OCI-LY7 (cell line): ENCODE measurements at regions of chr17 and their contacts with region 1.

Region 1: GRCh38 chr17:82105882-82106687 is 8.0 kb upstream of the FASN start:
- DNase-seq: peak; percentile 87
- H3K4me3 ChIP-seq: peak overlapping the region; percentile 58
- H3K27ac ChIP-seq: peak overlapping the region; percentile 62
- H3K4me1 ChIP-seq: peaks cover 46% of the 10 kb centered on the region
- CTCF ChIP-seq: peak; percentile 67

Region 2: DNA sequence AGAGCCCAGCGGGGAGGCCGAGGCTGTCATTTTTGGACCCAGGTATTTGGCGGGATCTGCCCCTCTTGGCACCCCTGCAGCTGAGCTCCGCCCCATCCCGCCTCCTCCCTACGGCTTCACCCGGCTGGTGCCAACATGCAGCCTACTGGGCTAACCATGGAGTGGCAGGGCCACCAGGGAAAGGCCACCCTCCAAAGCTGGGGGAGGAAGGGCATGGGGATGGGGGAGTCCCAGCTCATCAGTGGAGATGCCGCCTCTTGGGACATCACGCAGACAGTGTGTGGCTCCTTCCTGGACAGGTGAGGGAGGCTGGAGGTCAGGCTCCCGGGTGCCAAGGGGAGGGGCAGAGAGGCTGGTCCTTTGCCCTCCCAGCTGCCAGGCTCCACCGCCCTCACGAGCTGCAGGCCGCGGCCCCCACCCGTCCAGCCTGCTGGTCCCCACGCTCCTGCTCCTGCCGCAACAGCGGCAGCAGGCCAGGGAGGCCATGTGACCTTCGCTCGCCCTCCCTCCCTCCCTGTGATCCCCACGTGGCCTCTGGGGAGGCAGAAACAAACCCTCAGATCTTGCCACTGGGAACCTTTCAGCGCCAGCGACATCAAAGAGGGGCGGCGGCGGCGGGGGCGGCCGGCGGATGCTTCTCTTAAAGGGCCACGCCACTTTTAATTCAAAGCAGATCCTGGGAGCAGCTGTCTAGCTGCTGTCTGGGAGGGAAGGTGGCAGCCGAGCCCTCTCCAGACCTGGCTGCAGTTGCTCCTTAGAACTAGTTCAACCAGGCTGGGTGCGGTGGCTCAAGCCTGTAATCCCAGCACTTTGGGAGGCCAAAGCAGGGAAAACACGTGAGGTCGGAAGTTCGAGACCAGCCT is 138.3 kb before region 1 on chr17:
- CTCF ChIA-PET with region 1: no interaction called
- POLR2A ChIA-PET with region 1: no interaction called
- intact Hi-C with region 1: loop called (anchors 5 kb)
- DNase-seq: peak; percentile 97
- H3K4me3 ChIP-seq: peak overlapping the region; percentile 68
- H3K27ac ChIP-seq: peak overlapping the region; percentile 44
- H3K4me1 ChIP-seq: peaks cover 29% of the 10 kb centered on the region
- CTCF ChIP-seq: no peak

Region 3: DNA sequence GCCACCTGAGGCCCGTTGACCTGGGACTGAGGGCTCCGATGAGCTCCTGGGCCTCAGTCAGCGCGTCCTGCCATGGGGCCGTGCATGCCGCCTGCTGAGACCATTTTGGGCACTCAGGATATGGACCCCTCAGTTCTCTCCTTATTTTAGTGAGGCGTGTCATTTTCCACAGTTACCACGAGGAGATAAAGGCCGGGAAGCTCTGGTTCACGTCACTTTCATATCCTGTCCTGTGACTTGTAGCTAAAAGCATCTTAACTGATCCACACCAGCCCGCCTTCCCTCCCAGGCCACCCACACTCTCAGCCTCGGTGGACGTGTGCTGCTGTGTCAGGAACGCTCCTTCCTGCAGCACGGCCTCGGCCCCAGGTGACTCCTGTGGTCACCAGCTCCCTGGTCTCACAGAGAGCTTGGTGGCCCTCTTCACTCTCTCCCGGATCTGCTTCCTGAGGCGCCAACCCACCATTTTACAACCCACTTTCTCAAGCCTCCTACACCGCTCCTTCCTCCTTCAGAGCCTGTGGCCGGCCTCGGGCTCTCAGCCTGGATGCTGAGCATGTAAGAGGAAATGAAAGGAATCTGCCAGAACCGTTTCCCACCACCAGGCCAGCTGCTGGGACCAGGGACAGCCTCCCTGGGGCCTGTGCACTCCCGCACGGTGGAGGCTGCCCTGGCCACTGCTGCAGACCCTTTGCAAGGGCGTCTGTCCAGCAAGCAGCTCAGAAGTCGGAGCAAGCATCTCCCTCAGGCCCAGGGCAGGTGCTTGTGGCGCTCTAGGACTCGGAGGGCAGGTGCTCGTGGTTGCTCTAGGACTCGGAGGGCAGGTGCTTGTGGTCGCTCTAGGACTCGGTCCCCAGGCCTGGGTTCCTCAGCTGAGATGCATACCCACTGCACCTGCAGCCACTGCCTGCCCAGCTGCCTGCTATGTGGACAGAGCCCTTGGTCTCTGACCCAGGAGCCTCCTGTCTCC is 15.9 kb after region 1 on chr17:
- CTCF ChIA-PET with region 1: no interaction called
- POLR2A ChIA-PET with region 1: interaction called, 4 read pairs
- intact Hi-C with region 1: loop called (anchors 2 kb)
- DNase-seq: peak; percentile 77
- H3K4me3 ChIP-seq: no peak overlapping the region
- H3K27ac ChIP-seq: no peak overlapping the region
- H3K4me1 ChIP-seq: peaks cover 13% of the 10 kb centered on the region
- CTCF ChIP-seq: no peak